ENCODE measurements at regions of chr10 and their contacts with region 1.

Region 1: GRCh38 chr10:102225646-102226541 is at the start of gene ELOVL3:
- DNase-seq: peak; percentile 94 to 98
- ATAC-seq: peak; percentile 88 to 94
- H3K4me3 ChIP-seq: peak within 1 kb of the TSS; percentile 36
- H3K27ac ChIP-seq: peak within 1 kb of the TSS; percentile 55 to 56
- H3K4me1 ChIP-seq: peaks cover 17% of the 10 kb centered on the region; the same call in 2 of the 3 replicates
- CTCF ChIP-seq: no peak
- EP300 ChIP-seq: no peak
- POLR2A ChIP-seq: peak; percentile 23; the same call in 1 of the 2 replicates
- RAD21 ChIP-seq: no peak
- polyA plus RNA-seq, gene ELOVL3: 0.53 and 0.86 TPM in 2 replicates

Region 2: DNA sequence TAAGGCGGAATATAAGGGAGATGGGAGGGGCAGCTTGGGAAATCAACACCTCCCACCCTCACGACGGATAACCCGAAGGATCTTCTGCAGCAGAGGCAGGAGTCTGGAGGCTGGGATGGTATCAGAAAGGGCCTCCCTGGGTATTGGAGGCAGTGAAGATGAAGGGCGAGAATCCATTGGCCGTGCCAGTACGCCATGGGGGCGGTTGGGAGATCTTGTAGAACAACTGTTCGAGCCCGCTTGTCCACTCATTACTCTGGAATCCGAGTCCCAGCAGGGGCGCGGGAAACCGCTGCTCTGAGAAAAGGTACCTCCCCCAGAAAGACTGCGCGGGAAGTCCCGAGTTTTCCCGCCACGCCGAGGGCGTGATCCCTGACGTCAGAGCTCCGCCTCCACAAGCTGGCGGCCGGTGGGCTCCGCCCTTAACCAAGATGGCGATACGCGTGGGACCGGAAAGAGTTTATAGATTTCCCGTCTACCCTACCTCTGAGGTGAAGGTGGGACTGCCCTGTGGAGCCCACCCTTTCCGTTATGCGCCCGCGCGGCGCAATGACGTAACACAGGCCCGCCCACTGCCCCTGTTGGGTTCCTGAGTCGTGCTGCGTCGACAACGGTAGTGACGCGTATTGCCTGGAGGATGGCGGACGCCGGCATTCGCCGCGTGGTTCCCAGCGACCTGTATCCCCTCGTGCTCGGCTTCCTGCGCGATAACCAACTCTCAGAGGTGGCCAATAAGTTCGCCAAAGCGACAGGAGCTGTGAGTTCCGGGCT is 73.9 kb before region 1 on chr10 and contains the start of gene NOLC1:
- CTCF ChIA-PET with region 1: interaction called, 12 read pairs
- POLR2A ChIA-PET with region 1: no interaction called
- DNase-seq: peak; percentile 92 to 99
- ATAC-seq: peak; percentile 86 to 92
- H3K4me3 ChIP-seq: peak within 1 kb of the TSS; percentile 75
- H3K27ac ChIP-seq: peak within 1 kb of the TSS; percentile 86 to 91
- H3K4me1 ChIP-seq: peaks cover 28% of the 10 kb centered on the region
- CTCF ChIP-seq: no peak
- EP300 ChIP-seq: no peak
- POLR2A ChIP-seq: peak; percentile 94
- RAD21 ChIP-seq: no peak
- polyA plus RNA-seq, gene NOLC1: 128 and 188 TPM in 2 replicates

Region 3: DNA sequence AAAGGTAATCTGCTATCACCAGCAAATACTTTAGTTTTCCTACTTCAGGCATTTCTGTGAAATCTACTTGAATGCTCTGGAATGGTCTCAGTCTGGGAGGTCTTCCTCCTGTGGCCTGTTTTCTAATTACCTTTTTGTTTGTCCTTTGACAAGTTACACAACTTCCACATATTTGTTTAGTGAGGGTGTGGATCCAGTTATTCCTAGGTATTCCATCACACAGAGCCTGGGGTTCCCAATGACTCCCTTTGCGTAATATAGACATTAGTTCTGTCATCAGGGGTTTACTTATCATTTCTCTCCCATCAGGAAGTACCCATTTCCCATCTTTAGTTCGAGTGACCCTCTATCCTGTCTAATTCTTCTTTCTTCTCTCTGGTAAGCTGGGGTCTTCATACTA is 27.9 kb before region 1 on chr10:
- CTCF ChIA-PET with region 1: interaction called, 14 read pairs
- POLR2A ChIA-PET with region 1: no interaction called
- DNase-seq: peak in 1 of 2 experiments; percentile 54
- ATAC-seq: peak in 1 of 2 experiments; percentile 54; a peak in 1 of 6 replicates
- H3K4me3 ChIP-seq: no peak overlapping the region
- H3K27ac ChIP-seq: no peak overlapping the region
- H3K4me1 ChIP-seq: peaks cover 6% of the 10 kb centered on the region; the same call in 1 of the 3 replicates
- CTCF ChIP-seq: no peak
- EP300 ChIP-seq: no peak
- POLR2A ChIP-seq: no peak
- RAD21 ChIP-seq: no peak

Region 4: GRCh38 chr10:102268375-102268888 is 42.5 kb after region 1 on chr10:
- CTCF ChIA-PET with region 1: interaction called, 39 read pairs
- POLR2A ChIA-PET with region 1: interaction called, 3 read pairs
- DNase-seq: no peak
- ATAC-seq: no peak
- H3K4me3 ChIP-seq: no peak overlapping the region
- H3K27ac ChIP-seq: no peak overlapping the region
- H3K4me1 ChIP-seq: no peaks in the 10 kb centered on the region
- CTCF ChIP-seq: no peak
- EP300 ChIP-seq: no peak
- POLR2A ChIP-seq: no peak
- RAD21 ChIP-seq: no peak

Region 5: DNA sequence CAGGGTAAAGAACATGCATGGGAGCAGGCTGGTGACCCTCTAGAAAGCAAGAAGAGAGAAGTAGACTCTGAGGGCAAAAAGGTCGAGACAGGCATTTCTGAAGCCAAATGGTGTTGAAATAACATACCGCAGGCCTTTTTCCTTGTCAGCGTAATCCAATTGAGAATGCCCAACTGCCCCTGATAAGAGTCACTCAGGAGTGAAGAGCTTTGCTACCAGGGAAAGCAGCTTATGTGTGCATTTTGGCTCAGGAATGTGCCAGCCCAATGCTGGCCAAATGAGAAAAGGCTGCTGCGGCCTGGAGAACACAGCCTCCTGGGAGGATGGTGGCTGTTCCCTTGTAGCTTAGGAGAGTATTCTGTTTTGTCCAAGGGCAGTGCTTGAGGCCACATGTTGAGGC is 108.2 kb after region 1 on chr10:
- CTCF ChIA-PET with region 1: interaction called, 34 read pairs
- POLR2A ChIA-PET with region 1: no interaction called
- DNase-seq: no peak
- ATAC-seq: no peak
- H3K4me3 ChIP-seq: no peak overlapping the region
- H3K27ac ChIP-seq: no peak overlapping the region
- H3K4me1 ChIP-seq: no peaks in the 10 kb centered on the region
- CTCF ChIP-seq: no peak
- EP300 ChIP-seq: no peak
- POLR2A ChIP-seq: no peak
- RAD21 ChIP-seq: no peak

Region 6: GRCh38 chr10:102394079-102394800 is 168.3 kb after region 1 on chr10:
- CTCF ChIA-PET with region 1: interaction called, 450 read pairs
- POLR2A ChIA-PET with region 1: interaction called, 7 read pairs
- DNase-seq: peak; percentile 95 to 98
- ATAC-seq: peak; percentile 82 to 90
- H3K4me3 ChIP-seq: peak overlapping the region; percentile 56
- H3K27ac ChIP-seq: peak overlapping the region; percentile 68 to 91
- H3K4me1 ChIP-seq: peaks cover 22% of the 10 kb centered on the region; the same call in 2 of the 3 replicates
- CTCF ChIP-seq: peak; percentile 96
- EP300 ChIP-seq: no peak; a peak in 1 of 5 replicates
- POLR2A ChIP-seq: no peak
- RAD21 ChIP-seq: peak in 1 of 2 experiments; percentile 85; a peak in 4 of 5 replicates

Region 7: DNA sequence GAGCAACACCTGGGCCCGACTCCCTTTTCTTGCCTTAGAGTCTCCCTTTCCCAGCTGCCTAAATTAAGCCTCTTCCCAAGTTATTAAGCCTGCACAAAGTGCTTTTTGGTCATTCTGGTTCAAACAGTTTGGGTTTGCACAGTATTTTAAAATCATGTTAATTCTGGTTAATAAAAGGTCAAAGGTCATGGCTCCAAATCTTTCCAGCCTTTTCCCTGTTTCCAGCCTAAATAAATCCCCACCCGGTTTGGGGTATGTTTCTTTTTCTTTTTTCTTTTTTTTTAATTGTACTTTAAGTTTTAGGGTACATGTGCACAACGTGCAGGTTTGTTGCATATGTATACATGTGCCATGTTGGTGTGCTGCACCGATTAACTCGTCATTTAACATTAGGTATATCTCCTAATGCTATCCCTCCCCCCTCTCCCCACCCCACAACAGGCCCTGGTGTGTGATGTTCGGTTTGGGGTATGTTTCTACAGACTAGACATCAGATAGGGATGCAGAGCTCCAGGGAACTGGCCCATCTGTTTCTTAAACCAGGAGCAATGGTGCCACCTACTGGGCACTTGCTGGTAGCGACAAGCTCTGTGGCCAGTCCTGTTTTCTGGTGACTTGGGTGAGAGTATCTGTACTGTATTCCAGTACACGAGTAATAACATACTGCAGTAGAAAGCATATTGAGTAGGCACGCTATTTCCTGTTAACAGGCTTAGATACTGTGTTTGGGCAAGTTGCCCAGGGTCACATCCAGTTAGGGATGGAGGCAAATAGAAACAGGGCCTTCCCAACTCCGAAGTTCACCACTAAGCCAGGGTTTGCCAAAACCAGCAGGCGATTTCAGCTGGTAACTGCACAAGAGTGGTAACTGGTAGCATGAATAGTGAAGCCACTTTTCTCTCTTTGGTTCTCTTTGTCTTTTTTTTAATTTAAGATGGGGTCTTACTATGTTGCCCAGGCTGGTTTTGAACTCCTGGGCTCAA is 357.8 kb after region 1 on chr10:
- CTCF ChIA-PET with region 1: interaction called, 14 read pairs
- POLR2A ChIA-PET with region 1: no interaction called
- DNase-seq: peak; percentile 87 to 95
- ATAC-seq: peak; percentile 98 to 99
- H3K4me3 ChIP-seq: no peak overlapping the region
- H3K27ac ChIP-seq: no peak overlapping the region
- H3K4me1 ChIP-seq: no peaks in the 10 kb centered on the region
- CTCF ChIP-seq: peak; percentile 85
- EP300 ChIP-seq: no peak
- POLR2A ChIP-seq: no peak
- RAD21 ChIP-seq: peak; percentile 85 to 90